ENCODE measurements at regions of chr14 and their contacts with region 1.

Region 1: GRCh38 chr14:54108481-54109471 is 152.2 kb upstream of the BMP4 start:
- DNase-seq: peak; percentile 45 to 75
- H3K4me3 ChIP-seq: no peak overlapping the region
- H3K27ac ChIP-seq: peak overlapping the region; percentile 53
- H3K4me1 ChIP-seq: peaks cover 57% of the 10 kb centered on the region
- H3K27me3 ChIP-seq: no peaks in the 10 kb centered on the region
- CTCF ChIP-seq: no peak

Region 2: GRCh38 chr14:53539489-53540126 is 569.2 kb before region 1 on chr14:
- CTCF ChIA-PET with region 1: no interaction called
- POLR2A ChIA-PET with region 1: no interaction called
- intact Hi-C with region 1: loop called (anchors 5 kb)
- DNase-seq: peak; percentile 45 to 74
- H3K4me3 ChIP-seq: no peak overlapping the region
- H3K27ac ChIP-seq: no peak overlapping the region
- H3K4me1 ChIP-seq: no peaks in the 10 kb centered on the region
- H3K27me3 ChIP-seq: no peaks in the 10 kb centered on the region
- CTCF ChIP-seq: peak; percentile 88

Region 3: GRCh38 chr14:53842938-53843337 is 265.8 kb before region 1 on chr14:
- CTCF ChIA-PET with region 1: no interaction called
- POLR2A ChIA-PET with region 1: no interaction called
- intact Hi-C with region 1: loop called (anchors 1 kb)
- DNase-seq: peak; percentile 73 to 90
- H3K4me3 ChIP-seq: no peak overlapping the region
- H3K27ac ChIP-seq: peak overlapping the region; percentile 45
- H3K4me1 ChIP-seq: peaks cover 56% of the 10 kb centered on the region
- H3K27me3 ChIP-seq: no peaks in the 10 kb centered on the region
- CTCF ChIP-seq: no peak

Region 4: DNA sequence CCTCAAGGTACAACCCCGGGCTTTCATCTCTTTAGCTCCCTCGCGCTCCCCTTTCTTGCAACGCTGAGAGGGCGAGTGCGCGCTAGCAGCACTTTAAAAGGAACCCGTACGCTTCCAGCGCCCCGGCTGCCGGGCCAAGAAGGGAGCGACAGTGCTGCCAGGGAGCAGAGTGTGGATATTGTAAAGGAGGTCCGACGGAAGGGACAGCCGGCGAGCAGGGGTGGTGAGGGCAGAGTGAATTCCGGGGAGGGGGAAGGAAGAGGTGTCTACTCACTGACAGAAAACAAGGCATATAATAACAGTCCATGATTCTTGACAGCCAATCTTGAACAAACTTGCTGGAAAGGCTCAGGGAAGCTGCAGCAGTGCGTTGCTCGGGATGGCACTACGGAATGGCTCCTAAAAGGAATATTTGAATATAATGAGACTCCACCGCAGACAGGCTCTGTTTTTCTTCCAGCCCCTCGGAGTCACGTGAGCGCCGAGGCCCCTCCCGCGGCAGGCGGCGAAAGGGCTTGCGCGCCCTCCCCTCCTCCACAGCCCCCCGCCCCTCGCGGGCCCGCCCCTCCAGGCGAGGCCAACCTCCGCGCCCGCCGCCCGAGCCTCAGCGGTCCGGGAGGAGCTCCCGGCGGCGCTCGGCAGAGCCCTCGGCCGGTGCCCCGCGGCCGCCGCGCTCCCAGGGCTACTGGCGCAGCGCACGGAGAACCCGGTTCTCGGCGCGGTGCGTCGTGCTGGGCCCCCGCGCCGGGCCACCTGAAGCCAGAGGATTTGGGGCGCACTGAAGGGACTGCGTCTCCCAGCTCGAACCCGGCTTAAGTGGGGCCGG is 155.6 kb before region 1 on chr14:
- CTCF ChIA-PET with region 1: no interaction called
- POLR2A ChIA-PET with region 1: interaction called, 60 read pairs
- intact Hi-C with region 1: loop called (anchors 1 kb)
- DNase-seq: peak; percentile 40 to 80
- H3K4me3 ChIP-seq: peak overlapping the region; percentile 80
- H3K27ac ChIP-seq: peak overlapping the region; percentile 18
- H3K4me1 ChIP-seq: peaks cover 14% of the 10 kb centered on the region
- H3K27me3 ChIP-seq: no peaks in the 10 kb centered on the region
- CTCF ChIP-seq: no peak

Region 5: GRCh38 chr14:54147282-54147681 is 38.5 kb after region 1 on chr14:
- CTCF ChIA-PET with region 1: no interaction called
- POLR2A ChIA-PET with region 1: no interaction called
- intact Hi-C with region 1: loop called (anchors 2 kb)
- DNase-seq: peak in 1 of 2 experiments; percentile 58
- H3K4me3 ChIP-seq: no peak overlapping the region
- H3K27ac ChIP-seq: no peak overlapping the region
- H3K4me1 ChIP-seq: no peaks in the 10 kb centered on the region
- H3K27me3 ChIP-seq: no peaks in the 10 kb centered on the region
- CTCF ChIP-seq: no peak

Region 6: DNA sequence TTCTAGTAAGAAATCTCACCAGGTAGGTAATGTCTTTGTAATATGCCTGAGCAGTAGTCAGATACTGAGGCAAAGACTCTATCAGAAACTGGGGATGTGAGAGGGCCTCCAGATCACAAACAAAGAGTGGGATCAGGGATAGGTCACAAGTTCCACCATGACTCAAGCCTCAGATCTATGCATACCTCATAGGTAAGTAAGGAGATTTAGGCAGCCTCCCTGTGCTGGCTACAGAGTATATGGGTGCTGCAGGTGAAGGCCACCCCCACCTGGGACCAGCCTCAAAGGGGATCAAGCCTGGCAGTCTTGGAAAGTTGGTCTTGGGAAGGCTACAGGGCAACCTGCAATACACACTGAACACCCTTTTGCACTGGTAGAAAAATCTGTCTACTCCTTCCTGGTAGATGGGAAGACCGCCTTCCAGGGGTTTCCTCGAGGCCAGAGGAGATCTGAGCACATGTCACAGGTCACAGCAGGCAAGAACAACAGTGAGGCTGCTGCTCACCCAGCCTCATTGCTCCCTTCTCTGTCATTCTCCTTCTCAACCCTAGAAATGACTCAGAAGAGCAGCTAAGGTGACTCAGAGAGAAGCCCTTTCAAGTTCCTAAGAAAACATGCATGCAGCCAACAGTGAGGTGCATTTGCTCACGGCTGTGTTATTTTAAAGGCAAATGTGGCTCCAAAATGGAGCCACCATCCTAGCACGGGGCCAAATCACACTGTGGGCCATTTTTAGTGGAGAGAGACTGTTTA is 144.6 kb after region 1 on chr14:
- CTCF ChIA-PET with region 1: interaction called, 3 read pairs
- POLR2A ChIA-PET with region 1: no interaction called
- intact Hi-C with region 1: loop called (anchors 1 kb)
- DNase-seq: peak; percentile 53 to 94
- H3K4me3 ChIP-seq: no peak overlapping the region
- H3K27ac ChIP-seq: peak overlapping the region; percentile 98
- H3K4me1 ChIP-seq: peaks cover 48% of the 10 kb centered on the region
- H3K27me3 ChIP-seq: no peaks in the 10 kb centered on the region
- CTCF ChIP-seq: no peak

Region 7: DNA sequence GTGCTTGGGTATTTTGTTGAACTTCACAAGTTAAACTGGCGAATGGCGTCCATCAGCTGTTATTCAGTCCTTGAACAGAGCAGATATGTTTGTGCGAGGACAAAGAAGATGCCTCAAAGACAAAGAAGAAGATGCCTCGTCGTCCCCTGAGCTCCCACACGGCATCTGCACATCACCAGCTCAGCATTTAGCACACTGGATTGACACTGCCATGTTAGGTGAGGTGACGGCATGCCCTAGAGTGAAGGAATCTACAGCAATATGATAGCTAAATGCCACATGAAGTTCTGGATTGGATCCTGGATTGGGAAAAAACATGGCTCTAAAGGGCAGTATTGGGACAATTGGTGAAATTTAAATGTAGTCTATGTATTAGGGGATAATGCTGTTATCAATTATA is 473.6 kb after region 1 on chr14:
- CTCF ChIA-PET with region 1: no interaction called
- POLR2A ChIA-PET with region 1: interaction called, 11 read pairs
- intact Hi-C with region 1: no loop called
- DNase-seq: no peak
- H3K4me3 ChIP-seq: no peak overlapping the region
- H3K27ac ChIP-seq: no peak overlapping the region
- H3K4me1 ChIP-seq: no peaks in the 10 kb centered on the region
- H3K27me3 ChIP-seq: no peaks in the 10 kb centered on the region
- CTCF ChIP-seq: no peak

Measured in PC-9 (cell line).